A549 (cell line): ENCODE measurements at regions of chr1 and their contacts with region 1.

Region 1: GRCh38 chr1:171730052-171730451 is 11.8 kb downstream of the VAMP4 start:
- DNase-seq: no peak
- ATAC-seq: no peak
- H3K4me3 ChIP-seq: no peak overlapping the region
- H3K27ac ChIP-seq: no peak overlapping the region
- H3K4me1 ChIP-seq: no peaks in the 10 kb centered on the region
- CTCF ChIP-seq: no peak
- EP300 ChIP-seq: no peak
- POLR2A ChIP-seq: no peak
- RAD21 ChIP-seq: no peak

Region 2: GRCh38 chr1:171627020-171627419 is 103.0 kb before region 1 on chr1:
- CTCF ChIA-PET with region 1: no interaction called
- POLR2A ChIA-PET with region 1: no interaction called
- DNase-seq: no peak
- ATAC-seq: no peak
- H3K4me3 ChIP-seq: no peak overlapping the region
- H3K27ac ChIP-seq: no peak overlapping the region
- H3K4me1 ChIP-seq: no peaks in the 10 kb centered on the region
- CTCF ChIP-seq: no peak
- EP300 ChIP-seq: no peak
- POLR2A ChIP-seq: no peak
- RAD21 ChIP-seq: no peak

Region 3: GRCh38 chr1:171715813-171716251 is 14.2 kb before region 1 on chr1:
- CTCF ChIA-PET with region 1: interaction called, 16 read pairs
- POLR2A ChIA-PET with region 1: no interaction called
- DNase-seq: peak in 1 of 2 experiments; percentile 7
- ATAC-seq: peak in 1 of 2 experiments; percentile 47; a peak in 3 of 6 replicates
- H3K4me3 ChIP-seq: no peak overlapping the region
- H3K27ac ChIP-seq: no peak overlapping the region
- H3K4me1 ChIP-seq: no peaks in the 10 kb centered on the region
- CTCF ChIP-seq: peak; percentile 63
- EP300 ChIP-seq: no peak
- POLR2A ChIP-seq: no peak
- RAD21 ChIP-seq: peak; percentile 64